ENCODE measurements at regions of chr1 and their contacts with region 1.

Region 1: GRCh38 chr1:94926915-94927404 is at the start of gene CNN3:
- DNase-seq: peak; percentile 81 to 92
- H3K4me3 ChIP-seq: peak within 1 kb of the TSS; percentile 90 to 98 (median 97)
- H3K27ac ChIP-seq: peak within 1 kb of the TSS; percentile 96
- H3K4me1 ChIP-seq: peaks cover 4 to 20% (median 14%) of the 10 kb centered on the region in 4 experiments; a peak in 6 of 7 replicates
- H3K27me3 ChIP-seq: no peaks in the 10 kb centered on the region
- CTCF ChIP-seq: no peak
- EP300 ChIP-seq: peak in 1 of 2 experiments; percentile 76; a peak in 1 of 3 replicates
- POLR2A ChIP-seq: peak; percentile 93 to 99
- RAD21 ChIP-seq: 0 out of 4 replicates have a peak, but pooled peaks of 1 of the 2 experiments have one; percentile 0
- total RNA-seq, gene CNN3: 262 and 266 TPM in 2 replicates

Region 2: DNA sequence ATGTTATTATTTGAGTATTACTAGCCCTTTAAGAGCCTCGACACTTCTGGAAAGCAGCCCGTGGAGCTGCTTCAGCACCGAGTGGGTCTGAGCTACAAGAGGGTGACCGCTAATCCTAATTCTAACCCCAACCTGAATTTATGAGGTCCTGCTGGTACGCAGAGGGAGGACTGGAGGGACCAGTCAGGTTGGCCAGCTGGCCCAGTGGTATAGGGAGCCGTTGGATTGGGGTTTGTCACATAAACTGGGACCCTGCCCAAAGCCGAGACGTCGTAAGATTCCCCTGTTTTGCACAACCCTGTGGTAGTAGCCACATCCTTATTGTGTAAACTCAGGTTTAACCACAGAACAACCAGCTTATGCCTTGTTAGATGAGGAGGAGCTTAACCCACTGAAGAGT is 324.6 kb before region 1 on chr1:
- CTCF ChIA-PET with region 1: no interaction called
- POLR2A ChIA-PET with region 1: no interaction called
- DNase-seq: no peak
- H3K4me3 ChIP-seq: no peak overlapping the region
- H3K27ac ChIP-seq: no peak overlapping the region
- H3K4me1 ChIP-seq: no peaks in the 10 kb centered on the region
- H3K27me3 ChIP-seq: no peaks in the 10 kb centered on the region; a peak in 1 of 7 replicates
- CTCF ChIP-seq: no peak
- EP300 ChIP-seq: no peak
- POLR2A ChIP-seq: no peak
- RAD21 ChIP-seq: no peak

Region 3: GRCh38 chr1:94909486-94909885 is 17.5 kb before region 1 on chr1:
- CTCF ChIA-PET with region 1: interaction called, 12 read pairs
- POLR2A ChIA-PET with region 1: interaction called, 29 read pairs
- DNase-seq: no peak
- H3K4me3 ChIP-seq: no peak overlapping the region
- H3K27ac ChIP-seq: no peak overlapping the region
- H3K4me1 ChIP-seq: peaks cover 8 to 26% (median 19%) of the 10 kb centered on the region in 4 experiments
- H3K27me3 ChIP-seq: no peaks in the 10 kb centered on the region
- CTCF ChIP-seq: no peak
- EP300 ChIP-seq: no peak
- POLR2A ChIP-seq: no peak
- RAD21 ChIP-seq: no peak

Region 4: GRCh38 chr1:94936861-94937620 is 10.1 kb after region 1 on chr1:
- CTCF ChIA-PET with region 1: no interaction called
- POLR2A ChIA-PET with region 1: interaction called, 18 read pairs
- DNase-seq: no peak
- H3K4me3 ChIP-seq: 0 out of 8 replicates have a peak overlapping the region, but pooled peaks of 1 of the 4 experiments have one; percentile 0
- H3K27ac ChIP-seq: no peak overlapping the region
- H3K4me1 ChIP-seq: peaks cover 2 to 20% (median 10%) of the 10 kb centered on the region in 4 experiments; a peak in 4 of 7 replicates
- H3K27me3 ChIP-seq: no peaks in the 10 kb centered on the region
- CTCF ChIP-seq: no peak
- EP300 ChIP-seq: 0 out of 3 replicates have a peak, but pooled peaks of 1 of the 2 experiments have one; percentile 13
- POLR2A ChIP-seq: no peak
- RAD21 ChIP-seq: no peak

Region 5: GRCh38 chr1:94949681-94950661 is 23.0 kb after region 1 on chr1:
- CTCF ChIA-PET with region 1: no interaction called
- POLR2A ChIA-PET with region 1: interaction called, 11 read pairs
- DNase-seq: no peak
- H3K4me3 ChIP-seq: no peak overlapping the region
- H3K27ac ChIP-seq: no peak overlapping the region
- H3K4me1 ChIP-seq: peaks cover 0 to 5% (median 5%) of the 10 kb centered on the region in 4 experiments; a peak in 3 of 7 replicates
- H3K27me3 ChIP-seq: no peaks in the 10 kb centered on the region
- CTCF ChIP-seq: no peak
- EP300 ChIP-seq: no peak
- POLR2A ChIP-seq: no peak
- RAD21 ChIP-seq: no peak

Measured in H1 (cell line).